K562 (cell line): ENCODE measurements at regions of chr3 and their contacts with region 1.

Region 1: GRCh38 chr3:160686955-160687535 is 10.1 kb downstream of the ARL14 start:
- DNase-seq: peak in 3 of 4 experiments; percentile 14 to 23 (median 15)
- ATAC-seq: peak; percentile 60; the same call in 2 of the 3 replicates
- H3K4me3 ChIP-seq: no peak overlapping the region
- H3K27ac ChIP-seq: no peak overlapping the region
- H3K4me1 ChIP-seq: no peaks in the 10 kb centered on the region
- H3K27me3 ChIP-seq: no peaks in the 10 kb centered on the region
- CTCF ChIP-seq: peak in 1 of 3 experiments; percentile 47; a peak in 2 of 6 replicates
- EP300 ChIP-seq: no peak
- POLR2A ChIP-seq: no peak
- RAD21 ChIP-seq: peak; percentile 32 to 51

Region 2: DNA sequence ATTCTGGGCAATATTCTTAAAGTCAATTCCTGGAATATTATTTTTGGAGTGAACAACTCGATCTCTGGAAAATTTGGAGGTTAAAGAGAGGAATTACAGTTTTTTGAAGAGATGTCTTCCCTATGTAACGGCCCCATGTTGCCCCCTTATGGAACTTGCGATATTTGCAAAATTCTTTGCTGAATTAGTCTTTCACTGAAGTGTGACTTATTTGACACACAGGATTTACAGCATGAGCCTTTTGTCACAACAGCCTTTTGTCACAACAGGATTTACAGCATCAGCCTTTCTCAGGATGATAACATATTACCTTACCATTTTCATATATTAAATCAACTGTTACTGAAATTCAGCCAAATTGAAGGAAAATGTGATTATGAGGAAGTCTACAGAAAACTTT is 722.0 kb after region 1 on chr3:
- CTCF ChIA-PET with region 1: no interaction called
- POLR2A ChIA-PET with region 1: no interaction called
- in situ Hi-C with region 1: loop called (anchors 10 kb)
- intact Hi-C with region 1: no loop called
- DNase-seq: peak in 3 of 4 experiments; percentile 11 to 44 (median 14)
- ATAC-seq: peak; percentile 67; the same call in 2 of the 3 replicates
- H3K4me3 ChIP-seq: no peak overlapping the region
- H3K27ac ChIP-seq: no peak overlapping the region
- H3K4me1 ChIP-seq: no peaks in the 10 kb centered on the region
- H3K27me3 ChIP-seq: no peaks in the 10 kb centered on the region
- CTCF ChIP-seq: peak; percentile 37 to 58 (median 44); a peak in 4 of 6 replicates
- EP300 ChIP-seq: no peak
- POLR2A ChIP-seq: no peak
- RAD21 ChIP-seq: peak; percentile 31 to 53